Heart right ventricle (tissue), 16 donors: ENCODE measurements at regions of chr11 and their contacts with region 1.

Region 1: GRCh38 chr11:43172477-43172876 is 139.3 kb upstream of the API5 start:
- DNase-seq: no peak
- ATAC-seq: no peak
- H3K4me3 ChIP-seq: no peak overlapping the region
- H3K27ac ChIP-seq: no peak overlapping the region
- H3K4me1 ChIP-seq: no peaks in the 10 kb centered on the region
- H3K27me3 ChIP-seq: no peaks in the 10 kb centered on the region
- CTCF ChIP-seq: no peak

Region 2: DNA sequence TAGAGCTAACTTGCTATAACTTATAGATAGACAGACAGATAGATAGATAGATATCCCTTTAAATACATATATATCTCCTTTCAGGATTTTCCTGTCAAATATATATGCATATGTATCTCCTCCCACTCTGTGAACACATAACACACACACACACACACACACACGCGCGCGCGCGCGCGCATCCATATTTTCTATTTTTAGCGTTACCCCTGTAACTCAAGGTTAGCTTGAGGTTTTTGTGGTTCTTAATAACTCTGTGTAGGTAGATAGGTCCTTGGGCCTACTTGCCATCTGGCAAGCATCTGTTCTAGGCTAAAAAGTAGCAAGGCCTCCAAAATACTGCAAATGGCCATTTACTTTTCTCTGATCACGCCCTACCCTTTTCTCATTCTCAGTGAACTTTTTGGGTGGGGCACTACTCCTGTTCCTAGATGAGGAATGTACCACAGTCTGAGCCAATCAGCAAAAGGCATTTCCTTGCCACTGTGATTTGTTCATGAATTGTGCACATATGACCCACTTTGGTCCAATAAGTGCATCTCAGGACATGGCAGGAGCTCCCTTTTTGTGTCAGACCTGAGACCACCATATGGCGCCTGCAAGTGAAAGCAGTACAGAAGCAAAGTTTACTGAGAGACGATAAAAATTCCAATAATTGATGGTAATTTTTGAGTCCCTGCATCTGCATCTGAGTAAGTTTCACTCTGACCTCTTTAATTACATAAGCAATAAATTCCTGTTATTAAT is 601.2 kb before region 1 on chr11:
- intact Hi-C with region 1: no loop called
- DNase-seq: no peak
- ATAC-seq: no peak
- H3K4me3 ChIP-seq: no peak overlapping the region
- H3K27ac ChIP-seq: no peak overlapping the region
- H3K4me1 ChIP-seq: no peaks in the 10 kb centered on the region
- H3K27me3 ChIP-seq: no peaks in the 10 kb centered on the region
- CTCF ChIP-seq: no peak

Region 3: GRCh38 chr11:42996421-42997307 is 175.8 kb before region 1 on chr11:
- intact Hi-C with region 1: no loop called
- DNase-seq: peak in 1 of 2 donors; percentile 28
- ATAC-seq: peak in 3 of 8 donors; percentile 13 to 59 (median 37)
- H3K4me3 ChIP-seq: no peak overlapping the region
- H3K27ac ChIP-seq: no peak overlapping the region
- H3K4me1 ChIP-seq: peaks cover 0 to 5% (median 0%) of the 10 kb centered on the region in 9 donors
- H3K27me3 ChIP-seq: no peaks in the 10 kb centered on the region
- CTCF ChIP-seq: no peak

Region 4: GRCh38 chr11:43222215-43222614 is 49.7 kb after region 1 on chr11:
- intact Hi-C with region 1: loop called in 1 of 10 experiments (anchors 10 kb)
- DNase-seq: no peak
- ATAC-seq: no peak
- H3K4me3 ChIP-seq: no peak overlapping the region
- H3K27ac ChIP-seq: no peak overlapping the region
- H3K4me1 ChIP-seq: no peaks in the 10 kb centered on the region
- H3K27me3 ChIP-seq: no peaks in the 10 kb centered on the region
- CTCF ChIP-seq: no peak